ENCODE measurements at regions of chr12 and their contacts with region 1.

Region 1: DNA sequence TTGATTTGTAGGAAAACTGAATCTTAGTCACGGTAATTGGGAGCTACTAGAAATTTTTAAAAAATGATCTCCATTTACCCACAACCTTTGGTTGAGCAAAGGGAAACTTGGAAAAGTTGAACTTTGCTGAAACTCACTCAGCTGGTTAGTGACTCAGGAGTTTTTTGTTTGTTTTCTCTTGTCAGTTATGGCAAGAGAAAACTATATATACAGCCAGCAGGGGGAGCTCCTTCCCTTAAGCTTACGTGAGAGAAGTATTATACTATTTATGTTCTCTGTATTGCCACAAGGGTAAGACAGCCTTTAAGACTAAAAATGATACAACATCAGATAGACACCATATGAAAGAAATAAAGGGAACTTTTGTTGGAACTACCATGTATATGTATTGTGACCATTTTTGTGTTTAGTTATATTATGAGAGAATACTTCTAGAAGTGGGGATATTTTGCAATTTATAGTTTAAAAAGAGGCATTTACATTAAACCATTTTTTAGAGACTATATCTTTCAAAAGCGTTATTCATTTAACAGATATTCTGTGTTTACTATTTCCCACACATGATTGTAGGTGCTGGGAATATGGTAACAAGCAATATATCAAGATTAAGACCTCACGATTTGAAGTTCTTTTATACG is 28.1 kb upstream of the TBC1D30 start:
- DNase-seq: no peak
- ATAC-seq: peak; percentile 86
- H3K4me3 ChIP-seq: no peak overlapping the region
- H3K27ac ChIP-seq: no peak overlapping the region
- H3K4me1 ChIP-seq: peaks cover 12% of the 10 kb centered on the region
- H3K27me3 ChIP-seq: no peaks in the 10 kb centered on the region
- CTCF ChIP-seq: peak; percentile 64 to 77 (median 71)
- EP300 ChIP-seq: no peak
- POLR2A ChIP-seq: no peak
- RAD21 ChIP-seq: peak; percentile 87

Region 2: DNA sequence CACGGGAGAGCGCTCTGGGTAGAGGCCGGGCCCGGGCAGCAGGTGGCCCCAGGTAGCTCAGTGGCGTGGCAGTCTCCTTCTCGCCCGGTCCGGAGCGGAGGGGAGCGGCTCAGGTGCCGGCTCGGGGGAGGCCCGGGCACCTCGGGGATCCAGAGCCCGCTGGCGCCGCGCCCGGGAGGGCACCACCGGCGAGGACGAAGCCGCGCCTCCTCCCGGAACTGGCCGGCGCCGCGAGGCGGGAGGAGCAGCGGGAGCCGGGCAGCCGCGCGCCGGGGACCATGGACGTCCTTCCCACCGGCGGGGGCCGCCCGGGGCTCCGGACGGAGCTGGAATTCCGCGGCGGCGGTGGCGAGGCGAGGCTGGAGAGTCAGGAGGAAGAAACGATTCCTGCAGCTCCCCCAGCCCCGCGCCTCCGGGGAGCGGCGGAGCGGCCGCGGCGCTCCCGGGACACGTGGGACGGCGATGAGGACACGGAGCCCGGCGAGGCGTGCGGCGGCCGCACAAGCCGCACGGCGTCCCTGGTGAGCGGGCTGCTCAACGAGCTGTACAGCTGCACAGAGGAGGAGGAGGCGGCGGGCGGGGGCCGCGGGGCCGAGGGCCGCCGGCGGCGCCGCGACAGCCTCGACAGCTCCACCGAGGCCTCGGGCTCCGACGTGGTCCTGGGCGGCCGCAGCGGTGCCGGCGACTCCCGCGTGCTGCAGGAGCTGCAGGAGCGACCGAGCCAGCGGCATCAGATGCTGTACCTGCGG is 15.6 kb before region 1 on chr12:
- CTCF ChIA-PET with region 1: interaction called, 22 read pairs
- POLR2A ChIA-PET with region 1: no interaction called
- RAD21 ChIA-PET with region 1: interaction called, 5 read pairs
- SMC1A ChIA-PET with region 1: interaction called, 11 read pairs
- in situ Hi-C with region 1: no loop called
- intact Hi-C with region 1: no loop called
- DNase-seq: no peak
- ATAC-seq: peak; percentile 71
- H3K4me3 ChIP-seq: peak overlapping the region; percentile 65
- H3K27ac ChIP-seq: no peak overlapping the region
- H3K4me1 ChIP-seq: peaks cover 3% of the 10 kb centered on the region; the same call in 1 of the 2 replicates
- H3K27me3 ChIP-seq: peaks cover 2 to 12% of the 10 kb centered on the region in 2 experiments; a peak in 3 of 4 replicates
- CTCF ChIP-seq: no peak
- EP300 ChIP-seq: no peak
- POLR2A ChIP-seq: no peak
- RAD21 ChIP-seq: no peak

Region 3: GRCh38 chr12:64821183-64821582 is 24.9 kb after region 1 on chr12:
- CTCF ChIA-PET with region 1: interaction called, 32 read pairs
- POLR2A ChIA-PET with region 1: no interaction called
- RAD21 ChIA-PET with region 1: interaction called, 7 read pairs
- SMC1A ChIA-PET with region 1: interaction called, 4 read pairs
- in situ Hi-C with region 1: no loop called
- intact Hi-C with region 1: no loop called
- DNase-seq: no peak
- ATAC-seq: no peak
- H3K4me3 ChIP-seq: no peak overlapping the region
- H3K27ac ChIP-seq: no peak overlapping the region
- H3K4me1 ChIP-seq: no peaks in the 10 kb centered on the region
- H3K27me3 ChIP-seq: peaks cover 0 to 2% of the 10 kb centered on the region in 2 experiments; a peak in 2 of 4 replicates
- CTCF ChIP-seq: no peak
- EP300 ChIP-seq: no peak
- POLR2A ChIP-seq: no peak
- RAD21 ChIP-seq: no peak

Region 4: GRCh38 chr12:64883596-64884542 is 87.5 kb after region 1 on chr12:
- CTCF ChIA-PET with region 1: interaction called, 192 read pairs
- POLR2A ChIA-PET with region 1: interaction called, 7 read pairs
- RAD21 ChIA-PET with region 1: interaction called, 54 read pairs
- SMC1A ChIA-PET with region 1: interaction called, 130 read pairs
- in situ Hi-C with region 1: no loop called
- intact Hi-C with region 1: loop called (anchors 1 kb)
- DNase-seq: no peak
- ATAC-seq: peak; percentile 59
- H3K4me3 ChIP-seq: peak overlapping the region; percentile 28; the same call in 1 of the 2 replicates
- H3K27ac ChIP-seq: peak overlapping the region; percentile 98
- H3K4me1 ChIP-seq: peaks cover 41% of the 10 kb centered on the region
- H3K27me3 ChIP-seq: no peaks in the 10 kb centered on the region
- CTCF ChIP-seq: no peak
- EP300 ChIP-seq: no peak
- POLR2A ChIP-seq: no peak
- RAD21 ChIP-seq: no peak; the same call in 1 of the 2 replicates

Region 5: DNA sequence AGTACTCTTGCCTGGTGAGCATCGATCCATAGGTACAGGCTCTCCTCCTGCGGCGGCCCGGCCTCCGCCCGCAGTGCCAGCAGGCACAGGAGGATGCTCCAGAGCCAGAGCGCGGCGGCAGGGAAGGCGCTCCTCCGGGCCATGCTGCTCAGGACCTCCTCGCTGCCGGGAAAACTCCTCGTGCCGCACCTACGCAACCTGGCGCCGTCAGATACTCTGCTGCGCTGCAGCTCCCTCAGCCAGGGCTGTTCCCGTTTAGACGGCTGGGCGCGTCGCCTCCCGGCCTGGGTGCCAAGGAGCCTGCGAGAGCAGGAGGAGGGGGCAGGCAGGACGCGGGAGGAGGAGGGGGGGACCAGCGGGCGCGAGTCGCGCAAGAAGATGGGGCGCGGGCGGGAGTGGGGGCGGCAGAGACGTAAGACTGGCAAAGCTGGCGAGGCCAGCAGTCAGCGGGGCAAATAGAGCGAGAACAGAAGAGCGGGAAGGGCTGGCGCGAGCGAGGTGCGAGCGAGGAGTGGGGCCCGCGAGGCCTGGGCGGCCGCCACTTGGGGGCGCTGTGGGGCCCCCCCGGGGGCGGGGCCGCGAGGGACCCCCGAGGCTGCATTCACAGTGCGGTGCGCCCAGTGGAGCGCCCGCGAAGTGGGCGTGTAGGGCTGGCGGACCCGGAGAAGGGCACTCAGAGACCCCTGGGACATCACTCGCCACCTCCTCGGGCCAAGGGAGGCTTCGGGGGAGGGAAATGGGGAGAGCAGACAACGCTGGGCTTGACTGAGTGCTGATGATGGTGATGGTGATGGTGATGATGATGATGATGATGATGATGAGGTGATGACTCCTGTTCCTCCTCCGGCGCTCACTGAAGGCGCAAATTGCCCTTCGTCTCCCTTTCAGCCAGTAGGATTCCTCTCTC is 325.0 kb after region 1 on chr12 and contains the start of gene WIF1:
- CTCF ChIA-PET with region 1: interaction called, 38 read pairs
- POLR2A ChIA-PET with region 1: interaction called, 3 read pairs
- RAD21 ChIA-PET with region 1: interaction called, 16 read pairs
- SMC1A ChIA-PET with region 1: interaction called, 25 read pairs
- in situ Hi-C with region 1: loop called (anchors 5 kb)
- intact Hi-C with region 1: loop called (anchors 1 kb)
- DNase-seq: no peak
- ATAC-seq: peak; percentile 87
- H3K4me3 ChIP-seq: peak within 1 kb of the TSS; percentile 60; the same call in 1 of the 2 replicates
- H3K27ac ChIP-seq: no peak within 1 kb of the TSS
- H3K4me1 ChIP-seq: no peaks in the 10 kb centered on the region; the same call in 1 of the 2 replicates
- H3K27me3 ChIP-seq: peaks cover 2 to 5% of the 10 kb centered on the region in 2 experiments; a peak in 3 of 4 replicates
- CTCF ChIP-seq: peak; percentile 31 to 45 (median 41); a peak in 5 of 6 replicates
- EP300 ChIP-seq: no peak
- POLR2A ChIP-seq: no peak
- RAD21 ChIP-seq: 0 out of 2 replicates have a peak, but pooled peaks have one; percentile 12
- polyA plus RNA-seq, gene WIF1: 0.05 TPM in 1 of 2 experiments, not detected in the other